ENCODE measurements at regions of chr7 and their contacts with region 1.

Region 1: DNA sequence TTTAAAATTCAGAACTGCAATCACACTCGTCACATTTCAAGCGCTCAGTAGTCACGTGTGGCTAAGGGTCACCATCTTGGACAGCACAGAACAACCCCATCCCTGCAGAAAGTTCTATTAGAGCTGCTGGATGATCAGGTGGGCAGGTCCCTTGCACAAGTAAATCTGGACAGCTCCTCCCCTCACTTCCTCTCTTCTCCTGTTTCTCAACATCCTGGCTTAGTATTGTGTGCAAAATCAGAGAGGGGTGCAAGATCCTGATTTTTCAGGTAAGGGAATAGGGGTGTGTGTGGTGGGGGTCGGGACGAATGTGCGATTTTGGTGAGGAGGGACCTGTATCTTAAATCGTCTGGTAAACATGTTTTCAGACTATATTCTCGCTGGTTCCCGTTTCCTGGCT is at the start of gene GIMAP4:
- DNase-seq: peak; percentile 64
- H3K4me3 Mint-ChIP-seq: peak within 1 kb of the TSS; percentile 85
- H3K27ac Mint-ChIP-seq: peak within 1 kb of the TSS; percentile 96
- H3K4me1 Mint-ChIP-seq: peaks cover 66% of the 10 kb centered on the region
- H3K27me3 Mint-ChIP-seq: no peaks in the 10 kb centered on the region
- total RNA-seq, gene GIMAP4: 180 to 193 TPM

Region 2: GRCh38 chr7:150556521-150557138 is 10.5 kb before region 1 on chr7:
- CTCF ChIA-PET with region 1: interaction called, 5 read pairs
- intact Hi-C with region 1: loop called (anchors 1 kb)
- DNase-seq: no peak
- H3K4me3 Mint-ChIP-seq: peak overlapping the region; percentile 69
- H3K27ac Mint-ChIP-seq: peak overlapping the region; percentile 86
- H3K4me1 Mint-ChIP-seq: peaks cover 82% of the 10 kb centered on the region
- H3K27me3 Mint-ChIP-seq: no peaks in the 10 kb centered on the region

Region 3: GRCh38 chr7:150620617-150621371 is 53.6 kb after region 1 on chr7:
- CTCF ChIA-PET with region 1: interaction called, 9 read pairs
- intact Hi-C with region 1: loop called (anchors 1 kb)
- DNase-seq: peak; percentile 10
- H3K4me3 Mint-ChIP-seq: peak overlapping the region; percentile 8
- H3K27ac Mint-ChIP-seq: peak overlapping the region; percentile 82
- H3K4me1 Mint-ChIP-seq: peaks cover 53% of the 10 kb centered on the region
- H3K27me3 Mint-ChIP-seq: no peaks in the 10 kb centered on the region

Region 4: DNA sequence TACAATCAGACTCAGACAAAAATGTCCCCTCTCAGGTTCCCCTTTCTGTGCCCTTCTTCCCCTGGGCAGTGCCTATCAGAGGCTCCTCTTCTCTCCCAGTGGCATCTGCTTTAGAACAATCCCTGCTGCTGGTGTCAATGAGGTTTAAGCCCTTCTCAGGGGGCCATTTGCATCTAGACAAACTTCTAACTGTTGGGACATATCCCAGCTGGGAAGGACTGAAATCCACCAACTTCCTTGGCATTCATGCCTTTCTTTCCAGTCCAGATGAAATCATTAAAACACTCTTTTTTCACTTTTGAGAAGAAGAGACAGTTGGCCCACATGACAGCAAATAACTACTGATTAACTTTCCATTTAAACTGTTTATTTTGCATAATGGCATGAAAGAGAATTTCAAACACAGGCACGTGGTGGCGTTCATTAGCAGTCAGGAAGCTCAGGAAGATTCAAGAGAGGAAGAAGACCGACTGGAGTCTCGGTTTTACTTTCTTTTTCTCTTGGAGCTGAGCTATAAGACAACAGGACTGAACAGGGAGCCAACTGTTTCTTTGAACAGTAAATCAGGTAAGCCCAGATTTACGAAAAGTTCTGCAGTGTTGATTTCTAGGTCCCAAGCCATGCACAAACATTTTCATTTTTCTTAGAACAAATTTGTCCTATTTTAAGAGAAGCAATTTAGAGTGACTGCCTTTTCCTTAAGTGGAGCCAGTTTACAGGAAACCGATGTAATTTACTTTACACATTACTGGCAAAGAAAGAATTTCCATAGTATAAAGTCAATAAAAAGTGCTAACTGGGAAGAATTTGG is 118.3 kb after region 1 on chr7 and contains the start of gene GIMAP2:
- CTCF ChIA-PET with region 1: interaction called, 4 read pairs
- intact Hi-C with region 1: loop called (anchors 1 kb)
- DNase-seq: peak; percentile 56
- H3K4me3 Mint-ChIP-seq: peak within 1 kb of the TSS; percentile 93
- H3K27ac Mint-ChIP-seq: peak within 1 kb of the TSS; percentile 98
- H3K4me1 Mint-ChIP-seq: peaks cover 73% of the 10 kb centered on the region
- H3K27me3 Mint-ChIP-seq: no peaks in the 10 kb centered on the region
- total RNA-seq, gene GIMAP2: 45.0 to 49.5 TPM

Region 5: DNA sequence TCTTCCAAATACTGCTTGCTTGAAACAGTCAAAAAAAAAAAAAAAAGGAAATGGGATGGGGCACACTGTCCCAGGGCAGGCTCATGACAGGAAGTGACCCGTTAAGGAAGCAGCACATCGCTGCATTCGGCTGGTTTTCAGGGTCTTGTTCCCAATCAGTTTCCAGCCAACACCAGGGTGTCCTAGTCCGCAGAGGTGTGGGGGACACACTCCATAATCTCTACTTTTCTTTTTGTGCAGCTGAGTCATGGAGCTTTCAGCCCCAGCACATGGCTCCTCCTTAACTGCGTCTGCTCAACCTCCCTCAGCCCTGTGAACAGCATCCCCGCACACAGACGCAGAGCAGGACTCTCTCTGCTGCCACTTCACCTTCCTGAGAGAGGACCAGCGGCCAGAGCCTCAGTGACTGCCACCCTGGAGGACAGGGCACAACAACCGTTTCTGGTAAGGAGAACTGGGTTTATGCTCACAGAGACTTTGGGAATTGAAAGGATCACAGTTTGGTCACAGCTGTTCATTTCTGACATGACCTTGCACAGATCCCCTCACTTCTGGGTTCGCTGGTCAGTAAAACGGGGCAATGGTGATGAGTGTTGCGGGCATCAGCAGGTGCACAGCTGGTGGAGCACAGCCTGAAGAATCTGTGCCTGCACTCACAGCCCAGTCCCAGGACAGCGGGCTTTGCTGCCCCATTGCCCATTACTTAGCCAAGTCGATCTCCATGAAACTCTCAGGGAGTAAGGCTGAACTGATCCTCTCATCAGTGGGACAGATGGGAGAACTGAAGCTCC is 170.3 kb after region 1 on chr7 and contains the start of gene GIMAP5:
- CTCF ChIA-PET with region 1: interaction called, 12 read pairs
- intact Hi-C with region 1: loop called (anchors 1 kb)
- DNase-seq: peak; percentile 66
- H3K4me3 Mint-ChIP-seq: peak within 1 kb of the TSS; percentile 88
- H3K27ac Mint-ChIP-seq: peak within 1 kb of the TSS; percentile 95
- H3K4me1 Mint-ChIP-seq: peaks cover 72% of the 10 kb centered on the region
- H3K27me3 Mint-ChIP-seq: no peaks in the 10 kb centered on the region
- total RNA-seq, gene GIMAP5: 32.1 to 32.3 TPM

Measured in activated naive CD4-positive, alpha-beta T cell treated with anti-CD3 and anti-CD28 coated beads for 36 hours (primary cell).